B cell (primary cell): ENCODE measurements at regions of chr1 and their contacts with region 1.

Region 1: DNA sequence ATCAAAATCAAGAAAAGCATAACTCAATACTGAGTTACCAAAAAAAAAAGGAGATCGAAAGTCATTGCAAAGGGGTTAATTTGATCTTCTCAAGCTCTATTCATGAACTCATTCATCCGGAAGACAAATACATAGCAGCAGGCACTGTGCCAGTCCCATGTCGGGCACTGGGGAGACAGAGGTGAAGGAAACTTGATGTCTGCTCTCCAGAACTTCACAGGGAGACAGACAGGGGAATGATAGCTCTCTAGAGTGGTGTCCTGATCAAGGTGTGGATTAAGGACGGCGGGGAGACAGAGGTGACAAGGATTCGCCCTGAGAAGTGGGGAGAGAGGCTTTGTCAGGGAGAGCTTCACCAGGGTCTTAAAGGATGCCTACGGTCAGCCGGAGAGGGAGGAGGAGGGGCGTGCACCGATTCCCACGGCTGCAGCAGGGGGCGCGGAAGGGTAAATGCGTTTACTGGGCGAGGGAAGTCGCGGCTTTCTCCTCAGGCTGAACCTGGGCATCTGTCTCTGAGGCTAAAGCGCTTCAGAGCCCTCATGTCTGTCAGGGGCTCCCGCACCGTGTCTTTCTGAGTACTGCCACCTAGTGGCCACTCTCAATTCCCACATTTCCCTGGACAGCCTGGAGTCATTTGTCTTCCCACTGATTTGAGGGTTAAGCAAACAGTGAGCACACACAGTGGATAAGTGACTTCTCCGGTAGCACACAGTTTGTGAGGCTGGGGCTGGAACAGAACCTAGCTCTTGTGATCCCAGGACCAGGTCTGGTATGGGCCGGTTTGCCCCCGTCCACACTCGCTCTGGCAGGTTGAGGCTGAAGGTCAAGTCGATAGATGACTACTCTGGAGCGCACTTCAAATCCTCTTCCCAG is 152.8 kb downstream of the TENT5C start:
- DNase-seq: peak; percentile 84
- ATAC-seq: peak; percentile 86
- H3K4me3 ChIP-seq: peak overlapping the region in 3 of 5 experiments; percentile 34 to 55 (median 47)
- H3K4me3 Mint-ChIP-seq: peak overlapping the region; percentile 84
- H3K27ac ChIP-seq: no peak overlapping the region
- H3K27ac Mint-ChIP-seq: no peak overlapping the region
- H3K4me1 ChIP-seq: peaks cover 10 to 13% of the 10 kb centered on the region in 2 donors
- H3K4me1 Mint-ChIP-seq: peaks cover 13% of the 10 kb centered on the region
- H3K27me3 ChIP-seq: peaks cover 0 to 14% (median 8%) of the 10 kb centered on the region in 4 experiments
- H3K27me3 Mint-ChIP-seq: peaks cover 29% of the 10 kb centered on the region
- CTCF ChIP-seq: peak; percentile 88

Region 2: GRCh38 chr1:117121776-117122697 is 636.6 kb before region 1 on chr1:
- CTCF ChIA-PET with region 1: interaction called, 3 read pairs
- POLR2A ChIA-PET with region 1: no interaction called
- intact Hi-C with region 1: loop called (anchors 1 kb)
- DNase-seq: peak; percentile 88
- ATAC-seq: peak; percentile 87
- H3K4me3 ChIP-seq: peak overlapping the region; percentile 72 to 88 (median 80)
- H3K4me3 Mint-ChIP-seq: peak overlapping the region; percentile 92
- H3K27ac ChIP-seq: peak overlapping the region in 1 of 2 donors; percentile 32
- H3K27ac Mint-ChIP-seq: peak overlapping the region; percentile 69
- H3K4me1 ChIP-seq: peaks cover 9 to 15% of the 10 kb centered on the region in 2 donors
- H3K4me1 Mint-ChIP-seq: peaks cover 7% of the 10 kb centered on the region
- H3K27me3 ChIP-seq: peaks cover 0 to 13% (median 3%) of the 10 kb centered on the region in 4 experiments
- H3K27me3 Mint-ChIP-seq: peaks cover 6% of the 10 kb centered on the region
- CTCF ChIP-seq: peak; percentile 72

Region 3: DNA sequence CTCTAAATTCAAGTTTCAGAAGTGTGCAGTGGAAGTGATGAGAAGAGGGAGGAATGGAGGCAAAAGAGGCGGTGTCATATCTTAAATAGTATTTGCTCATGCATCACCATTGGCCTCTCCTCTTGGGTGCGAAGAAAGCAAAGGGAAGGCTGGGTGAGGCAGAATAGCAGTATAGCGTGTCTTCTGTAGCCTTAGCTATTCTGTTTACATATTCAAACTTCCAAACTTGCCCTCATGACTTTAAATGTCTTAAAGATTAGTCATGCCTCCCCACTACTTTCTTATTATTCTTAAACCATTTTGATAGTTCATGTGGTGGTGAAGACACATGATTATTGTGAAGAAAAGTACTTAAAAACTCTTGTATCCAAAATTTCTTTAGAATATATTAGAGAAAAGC is 257.4 kb before region 1 on chr1:
- CTCF ChIA-PET with region 1: interaction called, 427 read pairs
- POLR2A ChIA-PET with region 1: no interaction called
- intact Hi-C with region 1: no loop called
- DNase-seq: no peak
- ATAC-seq: no peak
- H3K4me3 ChIP-seq: no peak overlapping the region
- H3K4me3 Mint-ChIP-seq: no peak overlapping the region
- H3K27ac ChIP-seq: no peak overlapping the region
- H3K27ac Mint-ChIP-seq: no peak overlapping the region
- H3K4me1 ChIP-seq: no peaks in the 10 kb centered on the region
- H3K4me1 Mint-ChIP-seq: no peaks in the 10 kb centered on the region
- H3K27me3 ChIP-seq: no peaks in the 10 kb centered on the region
- H3K27me3 Mint-ChIP-seq: no peaks in the 10 kb centered on the region
- CTCF ChIP-seq: no peak

Region 4: GRCh38 chr1:117534995-117535467 is 223.6 kb before region 1 on chr1:
- CTCF ChIA-PET with region 1: interaction called, 511 read pairs
- POLR2A ChIA-PET with region 1: no interaction called
- intact Hi-C with region 1: loop called (anchors 1 kb)
- DNase-seq: peak; percentile 84
- ATAC-seq: peak; percentile 85
- H3K4me3 ChIP-seq: no peak overlapping the region
- H3K4me3 Mint-ChIP-seq: peak overlapping the region; percentile 27
- H3K27ac ChIP-seq: no peak overlapping the region
- H3K27ac Mint-ChIP-seq: peak overlapping the region; percentile 54
- H3K4me1 ChIP-seq: peaks cover 28 to 36% of the 10 kb centered on the region in 2 donors
- H3K4me1 Mint-ChIP-seq: peaks cover 2% of the 10 kb centered on the region
- H3K27me3 ChIP-seq: no peaks in the 10 kb centered on the region
- H3K27me3 Mint-ChIP-seq: no peaks in the 10 kb centered on the region
- CTCF ChIP-seq: peak; percentile 77

Region 5: GRCh38 chr1:117612517-117613248 is 146.0 kb before region 1 on chr1:
- CTCF ChIA-PET with region 1: interaction called, 29 read pairs
- POLR2A ChIA-PET with region 1: no interaction called
- intact Hi-C with region 1: loop called (anchors 2 kb)
- DNase-seq: peak; percentile 56
- ATAC-seq: peak; percentile 31
- H3K4me3 ChIP-seq: peak overlapping the region in 1 of 5 experiments; percentile 23
- H3K4me3 Mint-ChIP-seq: peak overlapping the region; percentile 84
- H3K27ac ChIP-seq: peak overlapping the region; percentile 0 to 52
- H3K27ac Mint-ChIP-seq: peak overlapping the region; percentile 84
- H3K4me1 ChIP-seq: peaks cover 93 to 100% of the 10 kb centered on the region in 2 donors
- H3K4me1 Mint-ChIP-seq: peaks cover 95% of the 10 kb centered on the region
- H3K27me3 ChIP-seq: no peaks in the 10 kb centered on the region
- H3K27me3 Mint-ChIP-seq: no peaks in the 10 kb centered on the region
- CTCF ChIP-seq: no peak

Region 6: GRCh38 chr1:117735045-117735992 is 23.4 kb before region 1 on chr1:
- CTCF ChIA-PET with region 1: interaction called, 19 read pairs
- POLR2A ChIA-PET with region 1: no interaction called
- intact Hi-C with region 1: no loop called
- DNase-seq: peak; percentile 61
- ATAC-seq: peak; percentile 57
- H3K4me3 ChIP-seq: peak overlapping the region; percentile 6 to 79 (median 41)
- H3K4me3 Mint-ChIP-seq: peak overlapping the region; percentile 88
- H3K27ac ChIP-seq: peak overlapping the region; percentile 42 to 78
- H3K27ac Mint-ChIP-seq: peak overlapping the region; percentile 91
- H3K4me1 ChIP-seq: peaks cover 12% of the 10 kb centered on the region in 2 donors
- H3K4me1 Mint-ChIP-seq: peaks cover 14% of the 10 kb centered on the region
- H3K27me3 ChIP-seq: no peaks in the 10 kb centered on the region
- H3K27me3 Mint-ChIP-seq: no peaks in the 10 kb centered on the region
- CTCF ChIP-seq: no peak